CD8-positive, alpha-beta T cell (primary cell): ENCODE measurements at regions of chr2 and their contacts with region 1.

Region 1: GRCh38 chr2:18560031-18560796 is at the start of gene RDH14:
- DNase-seq: peak; percentile 88 to 96 (median 94)
- ATAC-seq: peak; percentile 87
- H3K4me3 ChIP-seq: peak within 1 kb of the TSS; percentile 55 to 89
- H3K4me3 Mint-ChIP-seq: peak within 1 kb of the TSS; percentile 94
- H3K27ac ChIP-seq: peak within 1 kb of the TSS; percentile 81 to 92
- H3K27ac Mint-ChIP-seq: peak within 1 kb of the TSS; percentile 98
- H3K4me1 ChIP-seq: peaks cover 22% of the 10 kb centered on the region
- H3K4me1 Mint-ChIP-seq: peaks cover 42% of the 10 kb centered on the region
- H3K27me3 ChIP-seq: no peaks in the 10 kb centered on the region
- H3K27me3 Mint-ChIP-seq: no peaks in the 10 kb centered on the region
- CTCF ChIP-seq: no peak
- total RNA-seq, gene RDH14: 12.5 to 13.2 TPM

Region 2: DNA sequence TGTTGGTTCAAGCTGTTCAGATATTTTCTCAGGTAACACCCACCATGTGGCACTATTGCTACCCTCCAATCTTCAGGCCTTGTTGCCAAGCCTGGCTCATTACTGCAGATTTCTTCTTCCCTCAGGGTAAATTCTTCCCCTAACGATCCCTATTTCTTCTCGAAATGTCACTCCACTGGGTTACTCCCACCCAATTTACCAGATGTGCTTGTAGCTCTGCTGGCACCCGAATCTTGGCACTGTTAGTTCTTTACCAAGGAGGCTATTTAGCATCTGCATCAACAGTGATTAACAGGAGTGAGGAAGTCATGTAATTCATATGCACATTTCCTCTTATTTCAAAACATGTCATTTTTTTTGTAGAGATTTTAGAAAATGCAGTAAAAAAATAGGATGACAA is 1677.5 kb before region 1 on chr2:
- CTCF ChIA-PET with region 1: no interaction called
- POLR2A ChIA-PET with region 1: no interaction called
- intact Hi-C with region 1: no loop called
- DNase-seq: no peak
- ATAC-seq: no peak
- H3K4me3 ChIP-seq: no peak overlapping the region
- H3K4me3 Mint-ChIP-seq: no peak overlapping the region
- H3K27ac ChIP-seq: no peak overlapping the region
- H3K27ac Mint-ChIP-seq: no peak overlapping the region
- H3K4me1 ChIP-seq: no peaks in the 10 kb centered on the region
- H3K4me1 Mint-ChIP-seq: no peaks in the 10 kb centered on the region
- H3K27me3 ChIP-seq: no peaks in the 10 kb centered on the region
- H3K27me3 Mint-ChIP-seq: no peaks in the 10 kb centered on the region
- CTCF ChIP-seq: no peak

Region 3: DNA sequence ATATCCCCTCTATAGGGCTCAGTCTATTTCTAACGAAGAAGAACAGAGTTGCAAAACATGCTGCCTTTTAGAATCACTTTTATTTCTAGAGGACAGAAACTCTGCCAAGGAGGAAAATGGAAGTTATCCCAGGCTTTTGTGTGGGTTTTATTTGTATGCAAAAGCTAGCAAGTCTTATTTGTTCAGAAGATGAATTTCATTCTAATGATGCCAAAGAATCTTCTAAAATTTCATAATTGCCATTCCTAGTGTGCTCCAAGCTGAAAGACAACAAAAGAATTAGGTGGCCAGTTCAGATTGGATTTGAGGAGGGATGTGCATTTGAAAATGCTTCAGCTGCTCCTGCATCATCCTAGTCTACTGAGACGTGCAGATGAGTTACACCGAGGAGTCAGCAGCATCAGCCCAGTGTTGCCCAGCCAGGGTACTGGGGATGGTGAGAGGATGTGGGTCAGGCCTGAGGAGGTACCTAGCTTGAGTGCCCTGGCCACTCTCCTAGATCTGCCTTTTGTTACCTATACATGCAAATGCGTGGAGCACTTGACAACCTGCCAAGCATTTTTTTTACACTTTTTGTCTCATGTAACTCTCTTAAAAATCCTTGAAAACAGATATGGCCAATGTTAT is 601.6 kb before region 1 on chr2:
- CTCF ChIA-PET with region 1: no interaction called
- POLR2A ChIA-PET with region 1: no interaction called
- intact Hi-C with region 1: no loop called
- DNase-seq: no peak
- ATAC-seq: no peak
- H3K4me3 ChIP-seq: no peak overlapping the region
- H3K4me3 Mint-ChIP-seq: no peak overlapping the region
- H3K27ac ChIP-seq: no peak overlapping the region
- H3K27ac Mint-ChIP-seq: no peak overlapping the region
- H3K4me1 ChIP-seq: no peaks in the 10 kb centered on the region
- H3K4me1 Mint-ChIP-seq: no peaks in the 10 kb centered on the region
- H3K27me3 ChIP-seq: no peaks in the 10 kb centered on the region
- H3K27me3 Mint-ChIP-seq: no peaks in the 10 kb centered on the region
- CTCF ChIP-seq: no peak

Region 4: GRCh38 chr2:18546567-18546966 is 13.6 kb before region 1 on chr2:
- CTCF ChIA-PET with region 1: interaction called, 5 read pairs
- POLR2A ChIA-PET with region 1: interaction called, 12 read pairs
- intact Hi-C with region 1: no loop called
- DNase-seq: peak in 2 of 9 experiments; percentile 22 to 36
- ATAC-seq: peak; percentile 62
- H3K4me3 ChIP-seq: no peak overlapping the region
- H3K4me3 Mint-ChIP-seq: peak overlapping the region; percentile 32
- H3K27ac ChIP-seq: peak overlapping the region in 1 of 2 experiments; percentile 6
- H3K27ac Mint-ChIP-seq: peak overlapping the region; percentile 58
- H3K4me1 ChIP-seq: peaks cover 12% of the 10 kb centered on the region
- H3K4me1 Mint-ChIP-seq: peaks cover 61% of the 10 kb centered on the region
- H3K27me3 ChIP-seq: no peaks in the 10 kb centered on the region
- H3K27me3 Mint-ChIP-seq: no peaks in the 10 kb centered on the region
- CTCF ChIP-seq: no peak

Region 5: DNA sequence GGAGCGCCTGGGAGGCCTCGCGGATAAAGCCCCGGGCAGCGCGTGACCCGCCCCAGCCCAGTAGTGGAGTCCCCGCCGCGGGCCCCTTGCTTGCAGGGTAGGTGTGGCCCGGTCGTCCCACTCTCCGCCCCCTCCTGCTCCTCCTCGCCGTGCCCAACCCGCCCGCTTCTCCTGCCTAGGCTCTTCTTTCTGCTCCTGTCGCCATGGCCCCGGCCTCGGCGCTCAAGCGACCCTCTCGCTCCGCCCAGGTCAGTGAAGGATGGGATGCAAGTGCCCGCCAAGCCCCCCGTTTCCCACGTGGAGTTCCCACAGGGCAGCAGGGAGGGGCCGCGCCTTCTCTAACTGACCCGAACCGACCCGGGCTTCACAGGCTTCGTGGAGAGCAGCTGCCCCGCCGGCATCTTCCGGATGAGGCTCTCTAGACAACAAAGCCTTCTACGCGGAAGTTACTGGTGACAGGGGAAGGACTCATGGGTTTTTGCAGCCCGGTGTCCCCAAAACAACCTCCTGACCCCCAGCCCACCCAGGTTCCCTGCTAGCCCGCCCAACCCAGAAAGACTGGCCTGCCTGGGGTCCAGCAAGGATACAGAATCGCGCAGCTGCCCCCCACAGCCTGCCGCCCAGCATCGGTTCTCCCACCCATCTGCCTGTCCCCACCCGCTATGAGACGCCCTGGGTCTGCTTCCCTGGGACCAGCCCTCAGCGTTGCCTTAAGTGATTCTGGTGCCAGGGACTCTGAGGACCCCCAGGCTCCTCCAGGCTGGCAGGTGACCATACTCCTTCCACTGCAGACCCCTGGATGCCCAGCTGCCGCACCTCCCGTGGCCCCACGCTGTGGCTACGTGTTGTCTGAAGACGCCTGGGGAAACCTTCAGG is 1308.7 kb after region 1 on chr2:
- CTCF ChIA-PET with region 1: interaction called, 3 read pairs
- POLR2A ChIA-PET with region 1: interaction called, 8 read pairs
- intact Hi-C with region 1: loop called in 1 of 2 experiments (anchors 1 kb)
- DNase-seq: peak; percentile 42 to 85 (median 71)
- ATAC-seq: peak; percentile 96
- H3K4me3 ChIP-seq: peak overlapping the region; percentile 66 to 82
- H3K4me3 Mint-ChIP-seq: peak overlapping the region; percentile 95
- H3K27ac ChIP-seq: peak overlapping the region; percentile 76 to 79
- H3K27ac Mint-ChIP-seq: peak overlapping the region; percentile 97
- H3K4me1 ChIP-seq: peaks cover 13% of the 10 kb centered on the region
- H3K4me1 Mint-ChIP-seq: peaks cover 46% of the 10 kb centered on the region
- H3K27me3 ChIP-seq: no peaks in the 10 kb centered on the region
- H3K27me3 Mint-ChIP-seq: no peaks in the 10 kb centered on the region
- CTCF ChIP-seq: no peak

Region 6: GRCh38 chr2:19989681-19990415 is 1429.6 kb after region 1 on chr2 and contains the start of gene WDR35:
- CTCF ChIA-PET with region 1: no interaction called
- POLR2A ChIA-PET with region 1: no interaction called
- intact Hi-C with region 1: loop called in 1 of 2 experiments (anchors 1 kb)
- DNase-seq: peak; percentile 80 to 96 (median 92)
- ATAC-seq: peak; percentile 94
- H3K4me3 ChIP-seq: peak within 1 kb of the TSS; percentile 84 to 96
- H3K4me3 Mint-ChIP-seq: peak within 1 kb of the TSS; percentile 90
- H3K27ac ChIP-seq: peak within 1 kb of the TSS; percentile 68 to 74
- H3K27ac Mint-ChIP-seq: peak within 1 kb of the TSS; percentile 86
- H3K4me1 ChIP-seq: peaks cover 10% of the 10 kb centered on the region
- H3K4me1 Mint-ChIP-seq: peaks cover 28% of the 10 kb centered on the region
- H3K27me3 ChIP-seq: peaks cover 0 to 3% of the 10 kb centered on the region in 2 experiments
- H3K27me3 Mint-ChIP-seq: peaks cover 14% of the 10 kb centered on the region
- CTCF ChIP-seq: no peak
- total RNA-seq, gene WDR35: 2.4 to 2.9 TPM

Region 7: GRCh38 chr2:20343128-20343527 is 1782.9 kb after region 1 on chr2:
- CTCF ChIA-PET with region 1: no interaction called
- POLR2A ChIA-PET with region 1: no interaction called
- intact Hi-C with region 1: loop called in 1 of 2 experiments (anchors 2 kb)
- DNase-seq: no peak
- ATAC-seq: peak; percentile 49
- H3K4me3 ChIP-seq: no peak overlapping the region
- H3K4me3 Mint-ChIP-seq: no peak overlapping the region
- H3K27ac ChIP-seq: no peak overlapping the region
- H3K27ac Mint-ChIP-seq: no peak overlapping the region
- H3K4me1 ChIP-seq: peaks cover 80% of the 10 kb centered on the region
- H3K4me1 Mint-ChIP-seq: peaks cover 87% of the 10 kb centered on the region
- H3K27me3 ChIP-seq: no peaks in the 10 kb centered on the region
- H3K27me3 Mint-ChIP-seq: no peaks in the 10 kb centered on the region
- CTCF ChIP-seq: no peak